B cell (primary cell): ENCODE measurements at regions of chr12 and their contacts with region 1.

Region 1: DNA sequence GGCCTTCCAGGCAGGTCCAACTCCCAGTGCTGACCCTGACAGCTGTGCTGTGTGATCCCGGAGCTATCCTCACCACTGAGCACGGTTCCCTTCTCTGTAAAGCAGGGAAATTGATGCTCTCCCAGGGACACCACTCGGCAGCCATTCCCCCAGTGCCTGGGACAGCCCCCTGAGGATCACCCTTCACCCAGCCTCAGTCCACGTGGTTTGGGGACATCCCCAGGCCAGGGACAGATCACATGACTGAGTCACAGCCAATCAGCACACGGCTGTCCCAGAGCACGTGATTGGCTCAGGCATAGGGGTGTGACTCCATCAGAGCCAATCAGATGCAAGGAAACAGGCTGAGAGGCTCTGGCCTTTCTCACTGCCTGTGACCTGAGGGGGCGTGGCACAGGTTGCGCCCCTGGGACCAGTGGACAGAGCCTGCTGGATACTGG is 68.8 kb upstream of the SFSWAP start:
- DNase-seq: no peak
- ATAC-seq: no peak
- H3K4me3 ChIP-seq: no peak overlapping the region
- H3K4me3 Mint-ChIP-seq: no peak overlapping the region
- H3K27ac ChIP-seq: no peak overlapping the region
- H3K27ac Mint-ChIP-seq: no peak overlapping the region
- H3K4me1 ChIP-seq: no peaks in the 10 kb centered on the region
- H3K4me1 Mint-ChIP-seq: no peaks in the 10 kb centered on the region
- H3K27me3 ChIP-seq: peaks cover 0 to 5% (median 0%) of the 10 kb centered on the region in 4 experiments
- H3K27me3 Mint-ChIP-seq: peaks cover 14% of the 10 kb centered on the region
- CTCF ChIP-seq: no peak

Region 2: DNA sequence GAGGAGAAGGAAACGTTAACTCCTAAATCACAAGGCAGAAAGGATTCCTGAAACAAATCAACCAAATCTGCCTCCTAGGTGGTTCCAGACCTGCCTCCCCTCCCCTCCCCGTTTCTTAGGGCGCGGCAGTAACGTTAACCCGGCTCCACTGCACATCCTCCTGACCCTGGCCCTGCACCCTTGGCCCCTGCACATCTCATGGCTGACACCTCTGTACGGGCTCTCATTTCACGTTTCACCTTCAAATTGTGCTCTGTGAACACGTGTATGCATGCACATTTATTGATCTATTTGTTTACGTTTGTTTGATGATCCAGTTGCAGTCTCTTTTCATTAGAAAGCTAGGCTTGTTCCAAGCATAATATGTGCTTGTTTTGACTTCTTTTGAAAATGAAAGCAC is 330.4 kb before region 1 on chr12:
- CTCF ChIA-PET with region 1: no interaction called
- POLR2A ChIA-PET with region 1: no interaction called
- intact Hi-C with region 1: loop called (anchors 5 kb)
- DNase-seq: no peak
- ATAC-seq: no peak
- H3K4me3 ChIP-seq: no peak overlapping the region
- H3K4me3 Mint-ChIP-seq: no peak overlapping the region
- H3K27ac ChIP-seq: no peak overlapping the region
- H3K27ac Mint-ChIP-seq: no peak overlapping the region
- H3K4me1 ChIP-seq: no peaks in the 10 kb centered on the region
- H3K4me1 Mint-ChIP-seq: peaks cover 4% of the 10 kb centered on the region
- H3K27me3 ChIP-seq: peaks cover 0 to 7% (median 0%) of the 10 kb centered on the region in 4 experiments
- H3K27me3 Mint-ChIP-seq: peaks cover 27% of the 10 kb centered on the region
- CTCF ChIP-seq: no peak

Region 3: DNA sequence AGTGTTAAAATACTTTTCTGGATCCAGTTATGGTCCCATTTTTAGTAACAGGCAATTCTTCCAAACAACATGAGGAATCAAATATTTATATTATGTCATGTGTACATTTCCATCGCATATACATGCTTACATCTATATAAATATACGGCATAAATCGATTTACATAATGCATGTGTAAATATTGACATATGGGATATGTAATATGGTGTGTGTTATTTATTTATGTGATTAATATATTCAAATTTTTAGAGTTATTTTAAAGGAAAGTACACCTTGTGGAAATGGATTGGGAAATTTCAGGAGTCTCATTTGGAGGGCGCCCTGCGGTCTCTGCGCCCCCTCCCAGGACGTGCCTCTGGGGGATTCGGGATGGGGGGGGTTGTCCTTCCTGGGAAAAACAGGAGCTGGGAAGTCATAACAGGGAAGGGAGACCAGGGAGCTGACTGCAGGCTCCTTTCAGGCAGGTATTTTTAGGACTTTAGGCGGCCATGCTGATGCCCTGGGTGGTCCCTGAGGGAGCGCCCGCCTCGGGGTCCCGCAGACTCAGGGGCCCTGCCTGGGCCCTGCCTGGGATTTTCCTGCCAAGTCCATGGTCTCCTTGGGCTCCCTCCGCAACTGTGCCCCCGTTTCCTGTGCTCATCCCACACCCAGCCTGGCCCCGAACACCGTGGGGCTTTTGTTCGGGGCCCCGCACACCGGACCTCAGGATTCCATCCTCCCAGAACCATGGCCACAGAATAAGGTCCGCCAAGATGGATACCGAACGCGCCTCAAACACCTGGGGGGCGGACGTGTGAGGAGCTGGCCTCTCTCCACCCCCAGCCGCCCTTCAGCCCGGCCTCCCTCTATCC is 13.9 kb before region 1 on chr12:
- CTCF ChIA-PET with region 1: no interaction called
- POLR2A ChIA-PET with region 1: no interaction called
- intact Hi-C with region 1: no loop called
- DNase-seq: no peak
- ATAC-seq: no peak
- H3K4me3 ChIP-seq: no peak overlapping the region
- H3K4me3 Mint-ChIP-seq: no peak overlapping the region
- H3K27ac ChIP-seq: peak overlapping the region in 1 of 2 donors; percentile 52
- H3K27ac Mint-ChIP-seq: peak overlapping the region; percentile 86
- H3K4me1 ChIP-seq: peaks cover 0 to 21% of the 10 kb centered on the region in 2 donors
- H3K4me1 Mint-ChIP-seq: peaks cover 4% of the 10 kb centered on the region
- H3K27me3 ChIP-seq: no peaks in the 10 kb centered on the region
- H3K27me3 Mint-ChIP-seq: peaks cover 14% of the 10 kb centered on the region
- CTCF ChIP-seq: no peak

Region 4: GRCh38 chr12:131673888-131674257 is 31.8 kb after region 1 on chr12:
- CTCF ChIA-PET with region 1: no interaction called
- POLR2A ChIA-PET with region 1: no interaction called
- intact Hi-C with region 1: no loop called
- DNase-seq: no peak
- ATAC-seq: no peak
- H3K4me3 ChIP-seq: no peak overlapping the region
- H3K4me3 Mint-ChIP-seq: no peak overlapping the region
- H3K27ac ChIP-seq: no peak overlapping the region
- H3K27ac Mint-ChIP-seq: no peak overlapping the region
- H3K4me1 ChIP-seq: no peaks in the 10 kb centered on the region
- H3K4me1 Mint-ChIP-seq: no peaks in the 10 kb centered on the region
- H3K27me3 ChIP-seq: peaks cover 0 to 6% (median 0%) of the 10 kb centered on the region in 4 experiments
- H3K27me3 Mint-ChIP-seq: peaks cover 18% of the 10 kb centered on the region
- CTCF ChIP-seq: no peak

Region 5: DNA sequence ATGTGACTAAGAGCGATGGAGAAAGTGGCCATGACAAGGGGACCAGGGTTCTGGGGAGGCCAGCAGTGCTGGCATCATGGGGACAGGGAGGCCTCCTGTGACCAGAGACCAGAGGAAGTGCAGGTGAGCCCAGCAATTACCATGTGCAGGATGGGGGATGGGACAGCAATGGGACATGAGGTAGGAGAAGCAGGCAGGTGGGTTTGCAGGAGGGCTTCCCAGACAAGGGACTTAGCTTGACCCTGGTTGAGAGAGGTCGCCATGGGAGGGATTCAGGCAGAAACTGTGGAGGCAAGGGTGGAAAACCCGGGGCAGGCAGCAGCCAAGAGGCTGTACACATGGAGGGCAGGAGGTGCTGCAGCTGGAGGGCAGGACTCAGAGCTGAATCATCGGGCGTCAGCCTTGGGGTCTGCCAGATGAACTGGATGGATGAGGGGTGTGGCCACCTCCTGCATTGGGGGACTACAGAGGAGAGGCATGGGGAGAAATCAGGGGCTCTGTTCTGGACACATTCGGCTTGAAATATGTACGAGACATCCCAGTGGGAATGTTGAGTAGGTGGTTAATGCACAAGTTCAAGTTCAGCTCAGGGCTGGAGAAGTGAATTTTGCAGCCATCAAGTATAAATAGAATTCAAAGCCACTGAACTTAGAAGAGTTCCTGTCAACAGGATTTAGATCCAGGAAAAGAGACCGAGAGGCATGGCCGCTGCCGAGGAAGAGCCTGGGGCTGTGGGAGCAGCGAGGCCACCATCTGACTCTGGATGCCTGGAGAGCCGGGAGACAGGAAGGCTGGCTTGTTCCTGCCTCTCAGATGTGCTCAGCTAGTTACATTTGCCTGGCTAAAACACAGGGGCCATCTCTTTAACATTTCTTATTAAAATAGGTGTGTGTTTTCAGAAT is 105.4 kb after region 1 on chr12:
- CTCF ChIA-PET with region 1: no interaction called
- POLR2A ChIA-PET with region 1: no interaction called
- intact Hi-C with region 1: no loop called
- DNase-seq: no peak
- ATAC-seq: no peak
- H3K4me3 ChIP-seq: no peak overlapping the region
- H3K4me3 Mint-ChIP-seq: no peak overlapping the region
- H3K27ac ChIP-seq: no peak overlapping the region
- H3K27ac Mint-ChIP-seq: peak overlapping the region; percentile 20
- H3K4me1 ChIP-seq: no peaks in the 10 kb centered on the region
- H3K4me1 Mint-ChIP-seq: no peaks in the 10 kb centered on the region
- H3K27me3 ChIP-seq: no peaks in the 10 kb centered on the region
- H3K27me3 Mint-ChIP-seq: no peaks in the 10 kb centered on the region
- CTCF ChIP-seq: no peak